ENCODE measurements at regions of chr17 and their contacts with region 1.

Region 1: GRCh38 chr17:57243171-57243948 is 13.0 kb upstream of the MSI2 start:
- DNase-seq: peak; percentile 47 to 92
- H3K4me3 ChIP-seq: no peak overlapping the region
- H3K27ac ChIP-seq: no peak overlapping the region
- H3K4me1 ChIP-seq: peaks cover 0 to 3% (median under 1%) of the 10 kb centered on the region in 4 experiments; a peak in 2 of 7 replicates
- H3K27me3 ChIP-seq: no peaks in the 10 kb centered on the region
- CTCF ChIP-seq: peak; percentile 100
- EP300 ChIP-seq: no peak
- POLR2A ChIP-seq: no peak
- RAD21 ChIP-seq: peak; percentile 95 to 98

Region 2: DNA sequence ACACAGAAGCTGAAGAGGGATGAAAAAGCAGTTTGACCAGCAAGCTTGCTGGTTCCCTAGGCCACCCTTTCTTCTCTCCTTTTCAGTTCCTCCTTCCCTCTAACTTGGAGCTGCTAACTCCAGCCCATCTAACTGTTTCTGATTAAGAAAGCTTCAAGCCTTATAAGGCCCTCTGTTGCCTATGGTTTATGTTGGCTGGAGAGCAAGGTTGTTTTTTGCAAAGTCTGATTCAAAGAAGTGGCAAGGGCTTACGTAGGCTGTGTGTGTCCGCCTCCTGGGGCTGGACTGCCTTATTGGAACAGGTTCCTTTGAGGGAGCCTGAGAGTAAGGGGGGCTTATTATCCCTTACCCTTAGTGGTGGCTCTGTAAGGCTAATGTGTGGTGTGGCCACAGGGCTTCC is 151.2 kb before region 1 on chr17:
- CTCF ChIA-PET with region 1: no interaction called
- POLR2A ChIA-PET with region 1: no interaction called
- DNase-seq: no peak
- H3K4me3 ChIP-seq: no peak overlapping the region
- H3K27ac ChIP-seq: no peak overlapping the region
- H3K4me1 ChIP-seq: peaks cover 18 to 46% (median 36%) of the 10 kb centered on the region in 4 experiments
- H3K27me3 ChIP-seq: no peaks in the 10 kb centered on the region
- CTCF ChIP-seq: no peak
- EP300 ChIP-seq: no peak
- POLR2A ChIP-seq: no peak
- RAD21 ChIP-seq: no peak

Region 3: GRCh38 chr17:57130761-57131461 is 112.4 kb before region 1 on chr17:
- CTCF ChIA-PET with region 1: interaction called, 13 read pairs
- POLR2A ChIA-PET with region 1: no interaction called
- DNase-seq: peak; percentile 17 to 89
- H3K4me3 ChIP-seq: no peak overlapping the region
- H3K27ac ChIP-seq: no peak overlapping the region
- H3K4me1 ChIP-seq: peaks cover 0 to 3% (median under 1%) of the 10 kb centered on the region in 4 experiments; a peak in 6 of 7 replicates
- H3K27me3 ChIP-seq: no peaks in the 10 kb centered on the region
- CTCF ChIP-seq: peak; percentile 74 to 90 (median 78)
- EP300 ChIP-seq: no peak
- POLR2A ChIP-seq: no peak
- RAD21 ChIP-seq: peak; percentile 86 to 87

Region 4: DNA sequence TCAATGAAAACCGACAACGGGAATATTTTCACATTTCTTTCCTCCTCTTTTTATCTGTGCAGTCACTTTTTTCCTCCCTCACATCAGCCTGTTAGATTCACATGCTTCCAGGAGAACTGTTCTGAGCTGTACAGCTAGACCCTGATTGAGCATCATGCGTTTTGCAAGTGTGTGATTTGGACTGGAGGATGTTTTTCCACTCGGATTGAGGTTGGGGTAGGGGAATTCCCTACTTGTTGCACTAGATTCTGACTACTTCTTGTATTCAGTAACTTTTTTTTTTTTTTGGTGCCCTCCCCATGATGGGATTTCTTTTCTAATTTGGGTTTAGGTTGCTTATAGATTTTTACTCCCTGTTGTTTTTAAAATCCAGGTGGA is 17.7 kb after region 1 on chr17:
- CTCF ChIA-PET with region 1: interaction called, 38 read pairs
- POLR2A ChIA-PET with region 1: interaction called, 4 read pairs
- DNase-seq: no peak
- H3K4me3 ChIP-seq: peak overlapping the region in 1 of 4 experiments; percentile 94; a peak in 2 of 8 replicates
- H3K27ac ChIP-seq: no peak overlapping the region
- H3K4me1 ChIP-seq: peaks cover 2 to 31% (median 6%) of the 10 kb centered on the region in 4 experiments; a peak in 6 of 7 replicates
- H3K27me3 ChIP-seq: peaks cover 0 to 2% (median 0%) of the 10 kb centered on the region in 4 experiments; a peak in 1 of 7 replicates
- CTCF ChIP-seq: no peak
- EP300 ChIP-seq: no peak
- POLR2A ChIP-seq: no peak
- RAD21 ChIP-seq: no peak

Region 5: DNA sequence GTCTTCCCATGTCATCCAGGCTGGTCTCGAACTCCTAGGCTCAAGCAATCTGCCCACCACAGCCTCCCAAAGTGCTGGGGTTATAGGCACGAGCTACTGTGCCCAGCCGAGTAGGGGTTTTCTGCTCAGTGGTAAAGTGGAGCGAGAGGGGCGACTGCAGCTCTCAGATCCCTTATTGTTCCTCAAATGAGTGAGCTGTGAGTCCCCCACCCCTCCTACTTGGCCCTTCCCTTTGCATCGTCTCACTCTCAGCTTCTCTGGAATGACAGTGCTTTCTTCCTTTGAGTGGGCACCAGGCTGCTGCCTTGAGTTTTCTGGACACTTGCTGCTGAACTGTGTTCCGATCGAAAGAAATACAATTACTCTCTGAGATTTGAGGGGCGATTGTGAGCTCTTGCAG is 76.4 kb after region 1 on chr17:
- CTCF ChIA-PET with region 1: interaction called, 19 read pairs
- POLR2A ChIA-PET with region 1: no interaction called
- DNase-seq: no peak
- H3K4me3 ChIP-seq: no peak overlapping the region
- H3K27ac ChIP-seq: no peak overlapping the region
- H3K4me1 ChIP-seq: peaks cover under 1 to 10% (median 4%) of the 10 kb centered on the region in 4 experiments
- H3K27me3 ChIP-seq: no peaks in the 10 kb centered on the region
- CTCF ChIP-seq: no peak
- EP300 ChIP-seq: no peak
- POLR2A ChIP-seq: no peak
- RAD21 ChIP-seq: no peak

Region 6: DNA sequence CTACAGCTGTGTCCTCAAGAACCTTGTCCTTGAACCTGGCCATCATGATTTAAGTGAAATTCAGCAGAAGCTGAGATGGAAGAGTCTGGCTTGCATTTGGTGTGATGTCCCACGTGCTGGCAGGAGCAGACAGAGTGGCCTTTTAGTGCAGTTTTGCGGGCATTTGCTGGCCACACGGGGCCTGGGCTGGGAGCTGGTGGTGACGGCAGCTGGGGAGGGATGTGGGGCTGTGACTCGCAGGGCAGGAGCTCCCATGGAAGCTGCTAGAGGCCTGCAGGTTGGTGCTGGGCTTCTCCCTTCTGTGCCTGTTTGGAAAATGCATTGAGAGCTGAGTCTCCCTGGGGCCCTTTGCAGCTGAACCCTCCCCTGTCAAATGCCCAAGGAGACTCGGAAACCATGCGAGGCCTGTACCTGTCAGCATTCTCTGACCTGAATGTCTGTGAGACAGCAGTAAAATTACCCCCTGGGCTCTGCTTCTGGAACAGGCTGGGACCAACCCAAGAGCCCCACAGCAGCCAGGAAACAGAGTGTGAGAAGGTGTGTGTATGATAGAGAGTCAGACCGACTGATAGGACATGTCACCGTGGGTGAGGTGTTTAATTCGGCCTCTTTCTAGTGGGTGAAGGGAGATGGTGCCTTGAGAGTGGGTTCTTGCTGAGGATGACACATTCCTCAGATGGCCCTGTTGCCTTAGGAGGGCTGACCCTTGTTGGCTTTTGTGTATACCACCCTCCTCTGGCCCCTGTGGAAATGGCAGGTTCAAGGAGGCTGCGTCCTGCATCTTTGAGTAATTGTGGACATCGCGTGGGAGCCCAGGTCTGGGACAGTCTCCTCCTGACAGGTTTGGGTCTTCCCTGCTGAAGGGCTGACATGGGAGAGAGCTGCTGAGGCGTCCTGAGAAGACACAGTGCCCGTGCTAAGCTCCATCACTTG is 158.5 kb after region 1 on chr17:
- CTCF ChIA-PET with region 1: interaction called, 119 read pairs
- POLR2A ChIA-PET with region 1: no interaction called
- DNase-seq: no peak
- H3K4me3 ChIP-seq: no peak overlapping the region
- H3K27ac ChIP-seq: no peak overlapping the region
- H3K4me1 ChIP-seq: peaks cover 2 to 7% (median 5%) of the 10 kb centered on the region in 4 experiments; a peak in 6 of 7 replicates
- H3K27me3 ChIP-seq: no peaks in the 10 kb centered on the region
- CTCF ChIP-seq: peak; percentile 60 to 74 (median 72)
- EP300 ChIP-seq: no peak
- POLR2A ChIP-seq: no peak
- RAD21 ChIP-seq: peak; percentile 79 to 85

Region 7: DNA sequence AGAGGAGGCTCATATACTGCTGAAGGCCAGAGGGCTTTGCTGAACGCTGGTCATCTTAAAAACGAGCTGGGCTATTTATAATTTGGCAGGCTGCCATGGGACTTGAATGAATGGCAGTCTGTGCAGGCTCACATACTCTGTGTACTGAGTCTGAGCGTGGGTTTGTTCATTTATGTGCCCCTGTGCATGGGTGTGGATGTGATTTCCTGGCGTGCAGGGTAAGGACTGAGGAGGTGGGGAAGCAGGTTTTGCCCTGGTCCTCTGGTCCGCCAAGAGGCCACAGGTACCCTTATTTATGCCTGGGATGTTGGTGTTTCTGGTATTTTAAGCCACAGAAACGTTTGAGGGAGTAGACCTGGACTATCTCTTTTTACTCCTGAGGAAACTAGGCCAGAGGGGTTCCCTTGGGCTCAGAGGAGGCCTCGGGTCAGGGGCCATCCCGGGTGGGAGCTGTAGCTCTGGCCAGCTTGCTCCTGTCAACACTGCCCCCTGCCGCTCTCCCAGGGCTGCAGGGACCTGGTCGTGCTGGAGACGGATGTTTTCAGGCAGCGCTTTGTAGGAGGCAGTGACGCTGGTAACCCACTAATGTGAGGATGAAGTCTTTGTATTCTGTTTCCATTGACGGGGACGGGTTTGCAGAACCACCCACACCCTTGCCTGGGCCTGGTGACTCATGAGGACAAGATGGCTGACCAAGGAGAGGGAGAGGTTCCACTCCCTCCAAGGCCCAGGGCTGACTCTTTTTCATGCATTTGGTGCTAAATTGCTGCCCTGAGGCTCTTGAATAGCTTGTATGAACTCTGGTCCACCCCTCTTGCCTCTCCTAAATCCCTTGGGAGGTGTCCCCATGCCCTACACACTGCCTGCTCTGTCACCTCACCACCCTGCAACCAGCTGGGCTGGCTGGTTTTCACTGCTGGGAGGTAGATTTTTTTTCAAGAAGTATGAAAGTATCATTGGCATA is 197.4 kb after region 1 on chr17:
- CTCF ChIA-PET with region 1: interaction called, 34 read pairs
- POLR2A ChIA-PET with region 1: no interaction called
- DNase-seq: peak; percentile 21 to 82
- H3K4me3 ChIP-seq: no peak overlapping the region
- H3K27ac ChIP-seq: 0 out of 2 replicates have a peak overlapping the region, but pooled peaks have one; percentile 4
- H3K4me1 ChIP-seq: peaks cover 4 to 24% (median 9%) of the 10 kb centered on the region in 4 experiments
- H3K27me3 ChIP-seq: no peaks in the 10 kb centered on the region
- CTCF ChIP-seq: peak; percentile 64 to 68 (median 67)
- EP300 ChIP-seq: no peak
- POLR2A ChIP-seq: no peak
- RAD21 ChIP-seq: peak; percentile 60 to 75

Region 8: GRCh38 chr17:57584050-57584551 is 340.7 kb after region 1 on chr17:
- CTCF ChIA-PET with region 1: interaction called, 16 read pairs
- POLR2A ChIA-PET with region 1: no interaction called
- DNase-seq: peak in 1 of 2 experiments; percentile 10
- H3K4me3 ChIP-seq: no peak overlapping the region
- H3K27ac ChIP-seq: no peak overlapping the region
- H3K4me1 ChIP-seq: peaks cover 0 to 8% (median 3%) of the 10 kb centered on the region in 4 experiments; a peak in 4 of 7 replicates
- H3K27me3 ChIP-seq: no peaks in the 10 kb centered on the region
- CTCF ChIP-seq: peak; percentile 43 to 58 (median 49)
- EP300 ChIP-seq: no peak
- POLR2A ChIP-seq: no peak
- RAD21 ChIP-seq: peak; percentile 49 to 53

Measured in H1 (cell line).